ENCODE measurements at regions of chr2 and their contacts with region 1.

Region 1: GRCh38 chr2:196068271-196069209 is at the start of gene DNAH7:
- DNase-seq: peak; percentile 89
- H3K4me3 ChIP-seq: peak within 1 kb of the TSS; percentile 71
- H3K27ac ChIP-seq: no peak within 1 kb of the TSS
- H3K4me1 ChIP-seq: peaks cover 10% of the 10 kb centered on the region
- H3K27me3 ChIP-seq: no peaks in the 10 kb centered on the region
- CTCF ChIP-seq: peak; percentile 88
- total RNA-seq, gene DNAH7: 0.95 and 1.9 TPM in 2 replicates

Region 2: DNA sequence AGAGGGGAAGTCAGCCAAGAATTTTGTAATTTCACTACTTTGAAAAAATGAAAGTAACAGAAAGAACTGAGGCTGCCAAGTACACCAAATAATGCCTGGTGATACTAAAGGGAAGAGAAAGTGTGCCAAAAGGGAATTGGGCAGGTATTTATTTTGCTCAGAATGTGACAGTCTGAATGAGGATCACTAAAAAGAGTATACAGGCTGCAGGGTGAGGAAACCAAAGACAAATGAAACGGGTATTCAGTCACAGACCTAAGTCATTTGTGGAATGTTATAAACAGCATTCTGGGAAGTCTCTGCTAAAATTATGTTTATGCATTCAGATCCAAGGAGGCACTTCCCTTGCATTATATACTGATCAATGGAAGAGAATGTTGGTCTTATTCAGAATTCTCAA is 830.2 kb before region 1 on chr2:
- CTCF ChIA-PET with region 1: no interaction called
- POLR2A ChIA-PET with region 1: no interaction called
- intact Hi-C with region 1: loop called (anchors 5 kb)
- DNase-seq: no peak
- H3K4me3 ChIP-seq: no peak overlapping the region
- H3K27ac ChIP-seq: no peak overlapping the region
- H3K4me1 ChIP-seq: no peaks in the 10 kb centered on the region
- H3K27me3 ChIP-seq: no peaks in the 10 kb centered on the region
- CTCF ChIP-seq: no peak

Region 3: GRCh38 chr2:195407782-195408181 is 660.8 kb before region 1 on chr2:
- CTCF ChIA-PET with region 1: no interaction called
- POLR2A ChIA-PET with region 1: no interaction called
- intact Hi-C with region 1: loop called (anchors 10 kb)
- DNase-seq: no peak
- H3K4me3 ChIP-seq: no peak overlapping the region
- H3K27ac ChIP-seq: no peak overlapping the region
- H3K4me1 ChIP-seq: no peaks in the 10 kb centered on the region
- H3K27me3 ChIP-seq: no peaks in the 10 kb centered on the region
- CTCF ChIP-seq: no peak

Region 4: DNA sequence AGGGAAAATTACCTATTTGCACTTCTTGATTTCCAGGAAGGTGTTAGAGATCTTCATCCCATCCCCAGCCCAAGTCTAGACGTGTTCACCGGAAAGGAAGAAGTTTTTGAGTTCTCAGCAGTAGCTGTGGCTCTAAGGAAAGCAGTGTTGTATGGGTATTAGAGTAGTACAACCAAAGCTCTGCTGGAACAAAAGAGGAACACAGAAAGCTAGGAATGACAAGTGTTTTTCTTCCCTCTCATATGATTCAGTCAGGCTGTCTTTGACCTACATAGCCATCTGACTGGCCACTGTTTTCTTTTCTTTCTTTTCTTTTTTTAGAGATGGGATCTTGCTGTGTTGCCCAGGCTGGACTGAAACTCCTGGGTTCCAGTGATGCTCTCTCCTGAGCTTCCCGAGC is 494.2 kb before region 1 on chr2:
- CTCF ChIA-PET with region 1: no interaction called
- POLR2A ChIA-PET with region 1: no interaction called
- intact Hi-C with region 1: loop called (anchors 5 kb)
- DNase-seq: no peak
- H3K4me3 ChIP-seq: no peak overlapping the region
- H3K27ac ChIP-seq: no peak overlapping the region
- H3K4me1 ChIP-seq: peaks cover 11% of the 10 kb centered on the region
- H3K27me3 ChIP-seq: no peaks in the 10 kb centered on the region
- CTCF ChIP-seq: no peak

Region 5: DNA sequence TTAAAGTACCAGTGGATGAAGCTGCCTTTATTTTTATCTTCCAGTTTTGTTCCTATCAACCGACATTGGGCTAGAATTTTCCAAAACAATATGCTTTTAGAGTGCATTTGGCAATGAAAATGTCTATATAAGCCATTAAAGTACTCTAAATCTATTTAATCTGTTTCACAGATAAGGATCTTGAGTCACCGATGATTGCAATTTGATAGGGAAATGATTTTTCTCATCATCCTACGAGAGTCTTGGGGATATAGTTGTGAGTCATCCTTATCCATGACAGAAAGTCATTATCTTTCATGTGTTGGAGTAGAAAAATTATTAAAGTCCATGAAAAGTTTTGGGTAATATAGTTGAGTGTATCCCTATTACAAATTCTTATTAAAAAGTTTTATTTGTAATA is 385.4 kb before region 1 on chr2:
- CTCF ChIA-PET with region 1: no interaction called
- POLR2A ChIA-PET with region 1: no interaction called
- intact Hi-C with region 1: loop called (anchors 5 kb)
- DNase-seq: peak; percentile 62
- H3K4me3 ChIP-seq: no peak overlapping the region
- H3K27ac ChIP-seq: no peak overlapping the region
- H3K4me1 ChIP-seq: peaks cover 8% of the 10 kb centered on the region
- H3K27me3 ChIP-seq: no peaks in the 10 kb centered on the region
- CTCF ChIP-seq: no peak

Measured in A673 (cell line).